Cardiac septum (tissue), 1 donor: ENCODE measurements at regions of chr6 and their contacts with region 1.

Region 1: GRCh38 chr6:111252726-111253125 is 165.4 kb downstream of the SLC16A10 start:
- DNase-seq: no peak

Region 2: DNA sequence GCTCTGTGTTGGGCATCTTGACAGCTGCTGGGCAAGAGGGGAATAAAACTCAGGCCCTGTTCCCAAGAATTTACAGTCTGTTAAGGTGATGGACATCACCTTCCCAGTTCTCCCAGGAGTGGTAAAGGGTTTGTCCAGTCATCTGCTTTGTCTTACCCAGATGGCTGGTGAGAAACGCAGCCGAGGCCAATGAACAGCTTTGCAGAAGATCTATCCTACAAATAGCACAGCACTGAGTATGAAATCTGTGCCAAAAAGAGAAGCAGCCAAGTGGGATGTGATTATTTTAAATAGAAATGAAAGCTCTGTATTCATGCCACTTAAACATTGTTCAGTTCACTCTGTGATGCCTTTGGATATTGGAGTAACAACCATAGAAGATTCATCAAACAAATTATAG is 643.6 kb before region 1 on chr6:
- intact Hi-C with region 1: no loop called
- DNase-seq: no peak

Region 3: GRCh38 chr6:111011360-111012142 is 241.2 kb before region 1 on chr6:
- intact Hi-C with region 1: loop called (anchors 2 kb)
- DNase-seq: no peak

Region 4: GRCh38 chr6:111150577-111150976 is 102.1 kb before region 1 on chr6:
- intact Hi-C with region 1: no loop called
- DNase-seq: no peak

Region 5: DNA sequence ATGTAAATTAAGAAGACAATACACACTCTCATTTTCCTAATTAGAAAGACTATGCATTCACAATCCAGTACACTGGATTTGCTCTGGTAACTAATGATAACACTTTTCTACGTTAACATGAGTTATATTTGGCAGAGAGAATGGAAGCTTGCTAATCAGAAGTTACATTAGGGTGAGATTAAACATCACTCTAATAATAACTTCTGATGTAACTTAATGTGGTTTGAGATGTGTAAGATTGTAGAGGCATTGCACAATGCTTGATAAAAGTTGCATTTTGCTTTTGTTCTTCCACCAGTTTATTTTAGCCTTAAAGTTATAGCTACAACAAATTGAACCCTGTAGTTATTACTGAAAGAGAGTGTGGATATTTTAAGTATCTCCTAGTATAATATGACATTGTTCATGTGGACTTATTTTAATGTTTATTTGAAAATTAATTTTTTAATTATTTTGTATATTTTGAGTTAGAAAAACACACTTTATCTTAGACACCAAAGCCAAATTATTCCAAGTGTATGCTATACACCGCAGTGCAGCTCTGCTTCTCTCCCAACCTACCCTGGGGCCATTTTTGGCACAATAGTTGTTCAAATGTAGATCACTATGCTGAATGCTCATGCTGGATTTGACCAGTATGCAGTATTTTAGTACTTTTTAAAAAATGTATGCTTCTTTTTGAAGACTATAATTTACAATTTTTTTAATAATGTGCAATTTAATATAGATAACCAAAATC is 22.2 kb before region 1 on chr6:
- intact Hi-C with region 1: no loop called
- DNase-seq: no peak

Region 6: GRCh38 chr6:112396221-112396620 is 1143.5 kb after region 1 on chr6:
- intact Hi-C with region 1: no loop called
- DNase-seq: no peak